Activated naive CD4-positive, alpha-beta T cell treated with anti-CD3 and anti-CD28 coated beads for 36 hours (primary cell): ENCODE measurements at regions of chr16 and their contacts with region 1.

Region 1: GRCh38 chr16:69150146-69150865 is 17.9 kb downstream of the UTP4 start:
- DNase-seq: peak; percentile 66
- H3K4me3 Mint-ChIP-seq: no peak overlapping the region
- H3K27ac Mint-ChIP-seq: no peak overlapping the region
- H3K4me1 Mint-ChIP-seq: no peaks in the 10 kb centered on the region
- H3K27me3 Mint-ChIP-seq: no peaks in the 10 kb centered on the region

Region 2: DNA sequence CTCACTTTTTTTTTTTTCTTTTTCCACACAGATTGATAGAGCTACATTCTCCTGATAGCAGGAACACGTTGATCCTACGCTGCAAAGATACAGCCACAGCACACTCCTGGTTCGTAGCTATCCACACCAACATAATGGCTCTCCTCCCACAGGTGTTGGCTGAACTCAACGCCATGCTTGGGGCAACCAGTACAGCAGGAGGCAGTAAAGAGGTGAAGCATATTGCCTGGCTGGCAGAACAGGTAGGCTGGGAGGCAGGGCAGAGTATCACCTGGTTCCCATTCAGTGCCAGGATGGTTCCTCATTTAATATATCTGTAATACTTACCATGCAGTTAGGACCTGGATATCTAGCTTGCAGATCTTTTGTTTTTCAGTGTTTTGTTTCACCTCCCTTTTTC is 109.7 kb after region 1 on chr16:
- CTCF ChIA-PET with region 1: interaction called, 4 read pairs
- intact Hi-C with region 1: loop called (anchors 1 kb)
- DNase-seq: no peak
- H3K4me3 Mint-ChIP-seq: no peak overlapping the region
- H3K27ac Mint-ChIP-seq: no peak overlapping the region
- H3K4me1 Mint-ChIP-seq: no peaks in the 10 kb centered on the region
- H3K27me3 Mint-ChIP-seq: no peaks in the 10 kb centered on the region

Region 3: DNA sequence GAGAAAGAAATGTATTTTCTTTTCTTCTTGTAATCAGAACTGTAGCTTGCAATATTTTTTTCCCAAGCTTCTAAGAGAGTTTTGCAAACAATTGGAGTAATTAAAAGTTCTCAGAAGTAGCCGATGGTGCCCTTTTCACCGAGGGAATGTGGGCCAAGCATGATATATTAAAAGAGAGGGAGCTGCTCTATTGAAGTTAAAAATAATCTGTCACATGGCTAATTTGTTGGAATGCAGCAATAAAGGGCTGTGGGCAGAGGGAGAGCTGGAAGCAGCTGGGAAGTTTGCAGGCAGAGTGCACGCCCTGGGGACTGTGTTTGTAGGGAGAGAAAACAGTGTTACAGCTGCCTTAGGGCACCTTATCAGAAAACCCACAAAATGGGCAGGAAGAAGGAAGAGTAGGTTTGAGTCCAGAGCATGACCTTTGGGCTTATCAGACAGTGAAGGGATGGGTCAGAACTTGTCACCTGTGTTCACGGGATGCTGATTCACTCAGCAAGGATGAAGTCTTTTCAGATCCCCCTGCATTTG is 254.0 kb after region 1 on chr16:
- CTCF ChIA-PET with region 1: no interaction called
- intact Hi-C with region 1: no loop called
- DNase-seq: no peak
- H3K4me3 Mint-ChIP-seq: no peak overlapping the region
- H3K27ac Mint-ChIP-seq: no peak overlapping the region
- H3K4me1 Mint-ChIP-seq: peaks cover 9% of the 10 kb centered on the region
- H3K27me3 Mint-ChIP-seq: no peaks in the 10 kb centered on the region